Vagina (tissue), 2 donors: ENCODE measurements at regions of chrX and their contacts with region 1.

Region 1: GRCh38 chrX:1420371-1420770 is 28.5 kb upstream of the SLC25A6 start:
- DNase-seq: no peak
- H3K4me3 ChIP-seq: no peak overlapping the region
- H3K27ac ChIP-seq: no peak overlapping the region
- H3K4me1 ChIP-seq: no peaks in the 10 kb centered on the region
- H3K27me3 ChIP-seq: no peaks in the 10 kb centered on the region
- CTCF ChIP-seq: no peak
- POLR2A ChIP-seq: no peak

Region 2: GRCh38 chrX:331151-331774 is 1089.1 kb before region 1 on chrX:
- intact Hi-C with region 1: loop called (anchors 10 kb)
- DNase-seq: no peak
- H3K4me3 ChIP-seq: peak overlapping the region in 1 of 2 donors; percentile 21
- H3K27ac ChIP-seq: no peak overlapping the region
- H3K4me1 ChIP-seq: peaks cover 13% of the 10 kb centered on the region
- H3K27me3 ChIP-seq: no peaks in the 10 kb centered on the region
- CTCF ChIP-seq: no peak
- POLR2A ChIP-seq: no peak